Common myeloid progenitor, CD34-positive (primary cell): ENCODE measurements at regions of chr17 and their contacts with region 1.

Region 1: GRCh38 chr17:41966463-41967140 is at the start of gene CNP:
- DNase-seq: peak; percentile 92 to 96 (median 94)
- H3K4me3 ChIP-seq: peak within 1 kb of the TSS; percentile 72 to 86 (median 78)
- H3K27ac ChIP-seq: peak within 1 kb of the TSS; percentile 72 to 87
- H3K4me1 ChIP-seq: peaks cover 6 to 33% (median 22%) of the 10 kb centered on the region in 4 experiments
- H3K27me3 ChIP-seq: no peaks in the 10 kb centered on the region

Region 2: GRCh38 chr17:41937970-41938954 is 28.3 kb before region 1 on chr17:
- CTCF ChIA-PET with region 1: interaction called, 37 read pairs
- POLR2A ChIA-PET with region 1: no interaction called
- DNase-seq: peak; percentile 50 to 85 (median 66)
- H3K4me3 ChIP-seq: no peak overlapping the region
- H3K27ac ChIP-seq: no peak overlapping the region
- H3K4me1 ChIP-seq: peaks cover 0 to 6% (median 1%) of the 10 kb centered on the region in 4 experiments
- H3K27me3 ChIP-seq: no peaks in the 10 kb centered on the region